Posterior vena cava (tissue), 2 donors: ENCODE measurements at regions of chr10 and their contacts with region 1.

Region 1: GRCh38 chr10:34666008-34666705 is 148.9 kb downstream of the PARD3 start:
- DNase-seq: no peak

Region 2: DNA sequence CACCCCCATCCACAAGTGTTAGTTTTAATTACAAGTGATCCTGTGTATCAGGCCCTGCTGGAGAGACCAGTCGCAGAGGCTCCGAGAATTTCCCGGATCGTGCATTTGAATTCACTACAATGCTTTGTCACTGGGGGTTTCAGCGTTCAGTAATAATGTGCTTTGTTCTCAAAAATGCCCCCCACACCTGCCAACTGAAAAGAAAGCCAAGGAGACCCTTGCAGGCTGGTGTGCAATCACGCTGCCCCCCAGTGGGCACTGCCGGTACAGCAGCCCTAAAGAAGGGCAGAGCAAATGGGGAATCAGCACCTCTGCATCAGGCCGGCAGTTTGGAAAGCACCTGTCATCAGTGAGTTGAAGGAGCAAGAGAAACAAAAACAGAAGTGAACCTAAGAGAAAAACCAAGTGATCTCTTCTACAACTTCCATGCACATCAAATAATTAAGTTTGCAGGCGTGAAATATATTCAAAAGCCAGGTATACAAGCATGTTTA is 28.7 kb before region 1 on chr10:
- intact Hi-C with region 1: no loop called
- DNase-seq: peak; percentile 86

Region 3: DNA sequence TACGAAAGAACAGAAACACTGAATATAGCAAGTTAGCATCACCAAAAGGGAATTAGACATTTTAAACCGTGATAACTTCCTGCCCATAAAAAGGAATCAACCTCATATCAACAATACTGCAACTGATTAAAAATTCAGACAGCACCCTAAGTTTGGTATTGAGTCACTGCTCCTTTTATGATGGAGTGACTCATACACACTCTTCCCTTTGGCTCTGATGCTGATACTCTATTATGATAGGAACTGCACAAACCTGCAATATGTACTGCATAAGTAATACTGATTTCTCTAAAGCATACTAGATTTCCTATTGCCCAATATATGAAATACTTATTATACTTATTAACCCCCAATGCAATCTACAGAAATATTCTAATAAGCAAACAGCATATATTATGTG is 30.3 kb after region 1 on chr10:
- intact Hi-C with region 1: no loop called
- DNase-seq: no peak

Region 4: DNA sequence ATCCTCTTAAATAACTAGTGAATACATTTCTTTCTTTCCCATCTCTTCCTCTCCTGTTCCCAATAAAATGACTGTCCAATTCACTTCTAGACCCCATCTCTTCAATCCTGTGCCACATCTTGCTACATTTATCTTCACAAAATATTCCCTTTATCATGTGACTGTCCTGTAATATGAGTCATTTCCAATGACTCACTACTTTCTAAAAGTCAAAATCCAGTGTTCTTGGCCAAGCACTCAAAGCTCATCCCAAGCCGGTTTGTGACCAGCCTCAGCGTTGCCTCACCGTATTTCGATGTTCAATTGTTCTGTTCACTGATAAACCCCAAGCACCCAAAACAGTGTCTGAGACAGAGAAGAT is 44.2 kb after region 1 on chr10:
- intact Hi-C with region 1: loop called in 1 of 2 experiments (anchors 10 kb)
- DNase-seq: no peak

Region 5: DNA sequence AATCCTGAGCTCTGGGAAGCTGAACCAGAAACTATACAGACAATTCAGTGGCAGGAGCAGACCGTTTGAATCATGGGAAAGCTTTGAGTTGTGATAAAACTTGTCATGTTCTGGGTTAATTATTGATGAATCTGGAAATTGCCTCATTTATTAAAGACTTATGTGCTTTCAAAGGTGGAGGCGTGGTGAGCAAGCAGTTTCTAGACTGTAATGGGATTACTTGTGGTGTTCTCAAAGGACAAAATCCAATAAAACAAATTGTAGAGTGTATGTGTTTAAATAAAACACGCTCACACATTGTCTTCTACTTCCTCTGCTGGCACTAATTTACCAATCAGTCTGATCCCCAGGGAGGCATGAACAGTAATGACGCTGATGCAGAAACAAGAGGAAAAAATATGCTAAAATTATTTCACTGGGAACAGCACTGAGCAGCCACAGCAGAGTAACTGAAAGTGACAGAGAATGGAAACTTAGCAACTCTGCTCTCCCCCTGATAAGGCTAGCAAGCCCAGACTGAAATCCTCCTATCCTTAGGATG is 123.9 kb after region 1 on chr10:
- intact Hi-C with region 1: no loop called
- DNase-seq: no peak

Region 6: DNA sequence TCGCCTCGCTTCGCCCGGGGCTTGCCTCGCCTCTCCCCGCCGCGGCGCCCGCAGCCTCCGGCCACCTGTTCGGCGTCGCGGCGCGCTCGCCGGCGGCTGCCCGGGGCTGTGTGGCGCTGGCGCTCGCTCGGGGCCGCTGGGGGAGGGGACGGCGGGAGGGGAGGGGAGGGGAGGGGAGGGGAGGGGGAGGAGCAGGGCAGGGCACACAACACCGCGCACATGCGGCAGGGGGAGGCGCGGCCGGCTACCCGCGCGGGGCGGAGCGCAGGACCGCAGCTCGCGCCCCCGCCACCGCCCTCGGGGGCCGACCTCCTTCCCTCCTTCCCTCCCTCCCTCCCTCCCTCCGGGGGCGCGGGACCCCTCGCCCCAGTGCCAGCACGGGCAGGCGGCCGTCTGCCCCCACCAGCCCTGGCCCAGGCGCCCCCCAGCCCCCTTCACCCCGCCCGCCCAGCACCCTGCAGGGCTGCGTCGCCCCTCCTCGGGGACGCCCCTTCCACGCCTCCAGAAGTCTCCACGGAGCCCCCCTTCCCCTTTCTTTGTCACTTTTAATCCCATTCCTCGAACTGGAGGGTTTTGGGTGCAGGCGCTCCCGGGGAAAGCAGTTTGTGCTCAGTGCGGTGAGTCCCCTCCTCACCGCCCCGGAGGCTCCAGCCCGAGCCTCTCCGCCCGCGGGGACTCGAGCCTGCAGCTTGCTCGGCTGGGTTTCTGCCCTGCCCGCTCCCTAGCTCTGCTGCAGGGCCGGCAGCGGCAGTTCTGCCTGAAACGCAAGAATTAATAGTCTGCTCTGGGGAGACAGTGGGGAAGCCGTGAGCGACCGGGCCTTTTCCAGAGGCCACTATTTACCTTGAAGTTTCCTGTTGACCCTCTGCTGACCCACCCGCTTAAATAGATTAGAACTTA is 149.3 kb after region 1 on chr10 and contains the start of gene PARD3:
- intact Hi-C with region 1: loop called in 1 of 2 experiments (anchors 10 kb)
- DNase-seq: no peak
- total RNA-seq, gene PARD3: 28.8 to 30.6 TPM

Region 7: DNA sequence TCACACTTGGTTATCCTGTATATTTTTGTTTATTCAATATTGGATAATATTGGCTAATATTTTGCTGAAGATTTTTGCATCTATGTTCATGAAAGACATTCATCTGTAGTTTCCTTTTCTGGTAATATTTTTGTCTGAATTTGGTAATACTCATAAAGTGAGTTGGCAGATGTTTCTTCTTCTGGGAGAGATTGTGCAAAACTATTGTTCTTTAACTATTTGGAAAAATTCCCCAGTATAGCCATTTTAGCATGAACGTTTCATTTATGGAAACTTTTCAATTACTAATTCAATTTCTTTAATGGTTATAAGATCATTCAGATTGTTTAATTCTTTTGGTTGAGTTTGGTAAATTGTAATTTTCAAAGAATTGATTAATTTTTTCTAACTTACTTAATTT is 1536.7 kb after region 1 on chr10:
- intact Hi-C with region 1: no loop called
- DNase-seq: no peak